GM12878 (cell line): ENCODE measurements at regions of chr3 and their contacts with region 1.

Region 1: DNA sequence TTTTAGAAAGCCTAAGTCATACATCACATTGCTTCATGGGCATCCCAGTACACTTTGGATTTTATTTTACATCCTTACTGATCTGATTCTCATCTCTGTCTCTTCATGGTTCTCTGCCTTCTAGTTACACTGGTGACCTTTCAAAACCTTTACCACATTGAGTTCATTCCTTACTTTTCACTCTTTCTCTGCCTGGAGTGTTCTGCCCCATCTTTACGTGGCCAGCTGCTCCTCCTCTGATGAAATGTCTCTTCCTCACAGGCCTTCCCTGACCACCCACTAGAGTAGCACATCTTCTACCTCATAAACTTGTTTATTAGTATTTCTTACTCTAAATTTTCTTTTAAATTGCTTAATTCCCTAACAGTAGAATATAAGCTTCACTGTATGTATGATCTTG is 17.7 kb downstream of the CTNNB1 start:
- DNase-seq: no peak
- ATAC-seq: peak; percentile 12
- H3K4me3 ChIP-seq: no peak overlapping the region
- H3K27ac ChIP-seq: no peak overlapping the region
- H3K4me1 ChIP-seq: peaks cover 3% of the 10 kb centered on the region; the same call in 1 of the 2 replicates
- H3K27me3 ChIP-seq: no peaks in the 10 kb centered on the region
- CTCF ChIP-seq: no peak
- EP300 ChIP-seq: no peak
- POLR2A ChIP-seq: no peak
- RAD21 ChIP-seq: no peak

Region 2: GRCh38 chr3:41111016-41111415 is 106.0 kb before region 1 on chr3:
- CTCF ChIA-PET with region 1: no interaction called
- POLR2A ChIA-PET with region 1: no interaction called
- RAD21 ChIA-PET with region 1: no interaction called
- SMC1A ChIA-PET with region 1: no interaction called
- in situ Hi-C with region 1: no loop called
- intact Hi-C with region 1: no loop called
- DNase-seq: no peak
- ATAC-seq: no peak; the same call in 2 of the 3 replicates
- H3K4me3 ChIP-seq: no peak overlapping the region
- H3K27ac ChIP-seq: no peak overlapping the region
- H3K4me1 ChIP-seq: no peaks in the 10 kb centered on the region
- H3K27me3 ChIP-seq: no peaks in the 10 kb centered on the region
- CTCF ChIP-seq: no peak
- EP300 ChIP-seq: no peak
- POLR2A ChIP-seq: no peak
- RAD21 ChIP-seq: no peak

Region 3: DNA sequence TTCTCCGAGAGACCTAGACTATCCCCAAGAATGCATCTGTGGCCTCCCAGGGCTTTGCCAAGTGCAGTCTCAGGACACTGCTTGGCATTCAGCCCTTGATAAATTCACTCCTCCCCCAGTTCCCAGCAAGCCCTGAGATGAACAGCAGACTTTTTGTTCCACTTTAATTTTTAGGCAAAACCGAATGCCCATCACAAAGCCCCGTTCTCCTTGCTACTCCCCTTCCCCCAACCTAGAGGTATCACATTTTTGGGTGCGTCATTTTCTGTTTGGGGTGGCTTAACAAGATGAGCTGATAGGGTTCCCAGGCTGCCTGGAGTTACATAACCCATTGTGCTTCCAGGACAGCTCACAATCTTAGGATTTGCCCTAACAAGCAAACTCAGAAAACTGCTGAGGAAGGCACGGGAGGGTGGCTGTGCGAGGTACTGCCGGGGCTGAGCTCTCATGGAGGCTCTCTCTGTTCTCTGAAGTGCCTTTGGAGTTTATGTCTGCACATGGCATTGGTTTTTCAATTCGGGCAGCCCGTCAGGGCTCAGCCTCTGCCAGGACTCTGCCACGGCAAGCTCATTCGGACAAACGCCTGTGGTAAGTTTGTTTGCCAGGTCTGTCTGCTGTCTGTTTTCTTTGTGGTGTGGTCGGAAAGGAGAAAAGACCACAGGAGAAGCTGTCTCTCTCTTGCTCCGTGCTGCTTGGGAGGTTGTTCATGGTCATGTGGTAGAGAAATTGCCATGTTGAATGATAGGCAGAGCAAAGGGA is 874.2 kb after region 1 on chr3 and contains the start of gene TRAK1:
- CTCF ChIA-PET with region 1: no interaction called
- POLR2A ChIA-PET with region 1: no interaction called
- RAD21 ChIA-PET with region 1: no interaction called
- SMC1A ChIA-PET with region 1: no interaction called
- in situ Hi-C with region 1: no loop called
- intact Hi-C with region 1: loop called (anchors 10 kb)
- DNase-seq: no peak
- ATAC-seq: no peak
- H3K4me3 ChIP-seq: peak within 1 kb of the TSS; percentile 23; the same call in 1 of the 2 replicates
- H3K27ac ChIP-seq: peak within 1 kb of the TSS; percentile 63
- H3K4me1 ChIP-seq: peaks cover 79% of the 10 kb centered on the region
- H3K27me3 ChIP-seq: no peaks in the 10 kb centered on the region
- CTCF ChIP-seq: no peak
- EP300 ChIP-seq: no peak
- POLR2A ChIP-seq: no peak
- RAD21 ChIP-seq: no peak
- polyA plus RNA-seq, gene TRAK1: 6.6 to 6.7 TPM